HepG2 (cell line): ENCODE measurements at regions of chr7 and their contacts with region 1.

Region 1: GRCh38 chr7:27662490-27663205 is at the start of gene HIBADH:
- DNase-seq: peak; percentile 98
- ATAC-seq: peak; percentile 97
- H3K4me3 ChIP-seq: peak within 1 kb of the TSS; percentile 83 to 100 (median 87)
- H3K27ac ChIP-seq: peak within 1 kb of the TSS; percentile 91
- H3K4me1 ChIP-seq: peaks cover 33% of the 10 kb centered on the region
- H3K27me3 ChIP-seq: no peaks in the 10 kb centered on the region; a peak in 1 of 5 replicates
- CTCF ChIP-seq: peak; percentile 53
- EP300 ChIP-seq: no peak
- POLR2A ChIP-seq: peak; percentile 74 to 78; a peak in 3 of 4 replicates
- RAD21 ChIP-seq: no peak; the same call in 1 of the 2 replicates
- total RNA-seq, gene HIBADH: 59.5 and 75.2 TPM in 2 replicates

Region 2: DNA sequence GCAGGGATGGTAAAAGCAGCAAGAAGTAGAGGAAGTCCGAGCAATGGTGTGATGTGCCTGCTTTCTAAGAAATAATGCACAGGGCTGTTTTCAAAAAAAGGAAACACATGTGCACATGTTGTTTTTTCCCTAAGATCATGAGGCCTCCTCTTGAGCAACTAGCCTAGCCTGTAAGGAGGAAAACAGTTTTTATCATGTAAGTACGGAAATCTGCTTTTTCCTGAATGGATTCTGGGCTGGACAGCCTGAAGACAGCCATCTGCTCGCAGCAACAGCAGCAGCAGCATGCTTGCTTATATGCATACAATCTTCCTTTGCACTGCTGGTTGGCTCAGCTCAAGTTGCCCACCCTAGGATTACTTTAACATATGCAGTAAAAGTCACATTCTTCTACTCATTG is 87.0 kb before region 1 on chr7:
- CTCF ChIA-PET with region 1: no interaction called
- POLR2A ChIA-PET with region 1: no interaction called
- in situ Hi-C with region 1: no loop called
- intact Hi-C with region 1: no loop called
- DNase-seq: no peak
- ATAC-seq: no peak
- H3K4me3 ChIP-seq: no peak overlapping the region
- H3K27ac ChIP-seq: no peak overlapping the region
- H3K4me1 ChIP-seq: peaks cover 27% of the 10 kb centered on the region
- H3K27me3 ChIP-seq: no peaks in the 10 kb centered on the region
- CTCF ChIP-seq: no peak
- EP300 ChIP-seq: no peak
- POLR2A ChIP-seq: no peak
- RAD21 ChIP-seq: no peak

Region 3: GRCh38 chr7:27616914-27617548 is 45.6 kb before region 1 on chr7:
- CTCF ChIA-PET with region 1: no interaction called
- POLR2A ChIA-PET with region 1: interaction called, 19 read pairs
- in situ Hi-C with region 1: no loop called
- intact Hi-C with region 1: loop called (anchors 1 kb)
- DNase-seq: peak; percentile 12
- ATAC-seq: peak; percentile 36
- H3K4me3 ChIP-seq: peak overlapping the region; percentile 51 to 64 (median 58)
- H3K27ac ChIP-seq: peak overlapping the region; percentile 97
- H3K4me1 ChIP-seq: peaks cover 35% of the 10 kb centered on the region
- H3K27me3 ChIP-seq: no peaks in the 10 kb centered on the region
- CTCF ChIP-seq: no peak
- EP300 ChIP-seq: no peak
- POLR2A ChIP-seq: no peak
- RAD21 ChIP-seq: no peak

Region 4: GRCh38 chr7:27677912-27678612 is 15.4 kb after region 1 on chr7:
- CTCF ChIA-PET with region 1: no interaction called
- POLR2A ChIA-PET with region 1: interaction called, 29 read pairs
- in situ Hi-C with region 1: no loop called
- intact Hi-C with region 1: no loop called
- DNase-seq: peak; percentile 83
- ATAC-seq: peak; percentile 62
- H3K4me3 ChIP-seq: no peak overlapping the region; a peak in 1 of 6 replicates
- H3K27ac ChIP-seq: peak overlapping the region; percentile 74
- H3K4me1 ChIP-seq: peaks cover 41% of the 10 kb centered on the region
- H3K27me3 ChIP-seq: no peaks in the 10 kb centered on the region
- CTCF ChIP-seq: no peak
- EP300 ChIP-seq: peak in 1 of 2 experiments; percentile 55; a peak in 1 of 4 replicates
- POLR2A ChIP-seq: no peak
- RAD21 ChIP-seq: no peak

Region 5: GRCh38 chr7:27689591-27690164 is 27.0 kb after region 1 on chr7:
- CTCF ChIA-PET with region 1: no interaction called
- POLR2A ChIA-PET with region 1: interaction called, 10 read pairs
- in situ Hi-C with region 1: no loop called
- intact Hi-C with region 1: no loop called
- DNase-seq: peak; percentile 35
- ATAC-seq: peak; percentile 92
- H3K4me3 ChIP-seq: no peak overlapping the region
- H3K27ac ChIP-seq: no peak overlapping the region
- H3K4me1 ChIP-seq: peaks cover 40% of the 10 kb centered on the region
- H3K27me3 ChIP-seq: no peaks in the 10 kb centered on the region
- CTCF ChIP-seq: peak; percentile 87
- EP300 ChIP-seq: no peak
- POLR2A ChIP-seq: no peak
- RAD21 ChIP-seq: peak; percentile 76

Region 6: DNA sequence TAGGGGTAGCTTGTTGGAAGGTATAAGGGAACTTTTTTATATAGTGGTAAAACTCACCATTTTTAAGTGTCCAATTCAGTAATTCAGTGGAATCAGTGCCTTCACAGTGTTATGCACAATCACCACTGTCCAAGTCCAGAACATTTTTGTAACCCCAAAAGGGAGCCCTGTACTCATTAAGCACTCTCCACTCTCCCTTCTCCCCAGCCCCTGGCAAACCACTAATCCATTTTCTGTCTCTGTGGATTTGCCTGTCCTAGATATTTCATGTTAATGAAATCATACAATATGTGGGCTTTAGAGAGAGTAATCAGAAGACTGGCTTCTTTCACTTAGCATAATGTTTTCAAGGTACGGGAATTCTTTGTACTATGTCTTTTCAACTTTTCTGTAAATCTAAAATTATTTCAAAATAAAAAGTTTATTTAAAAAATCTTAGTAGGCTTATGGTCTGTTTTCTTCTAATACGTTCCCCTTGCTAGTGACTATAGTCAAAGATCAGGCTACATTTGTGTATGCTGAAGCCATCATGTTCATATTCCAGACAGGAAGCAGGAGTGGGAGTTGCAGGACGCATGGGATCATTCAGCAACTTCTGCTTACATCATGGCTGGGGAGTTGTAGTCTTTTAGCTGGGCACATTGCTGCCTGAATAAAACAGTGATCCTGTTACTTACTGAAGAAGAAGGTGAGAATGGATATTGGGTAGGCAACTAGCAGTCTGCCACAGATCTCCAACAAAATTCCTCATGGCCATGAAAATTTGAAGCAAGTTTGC is 42.0 kb after region 1 on chr7:
- CTCF ChIA-PET with region 1: no interaction called
- POLR2A ChIA-PET with region 1: no interaction called
- in situ Hi-C with region 1: no loop called
- intact Hi-C with region 1: no loop called
- DNase-seq: no peak
- ATAC-seq: no peak
- H3K4me3 ChIP-seq: no peak overlapping the region
- H3K27ac ChIP-seq: no peak overlapping the region
- H3K4me1 ChIP-seq: no peaks in the 10 kb centered on the region
- H3K27me3 ChIP-seq: no peaks in the 10 kb centered on the region
- CTCF ChIP-seq: no peak
- EP300 ChIP-seq: no peak
- POLR2A ChIP-seq: no peak
- RAD21 ChIP-seq: no peak

Region 7: GRCh38 chr7:27714831-27715444 is 52.3 kb after region 1 on chr7:
- CTCF ChIA-PET with region 1: no interaction called
- POLR2A ChIA-PET with region 1: interaction called, 10 read pairs
- in situ Hi-C with region 1: no loop called
- intact Hi-C with region 1: no loop called
- DNase-seq: peak; percentile 86
- ATAC-seq: peak; percentile 85
- H3K4me3 ChIP-seq: peak overlapping the region in 1 of 3 experiments; percentile 16; a peak in 1 of 6 replicates
- H3K27ac ChIP-seq: peak overlapping the region; percentile 11
- H3K4me1 ChIP-seq: peaks cover 58% of the 10 kb centered on the region
- H3K27me3 ChIP-seq: no peaks in the 10 kb centered on the region
- CTCF ChIP-seq: no peak
- EP300 ChIP-seq: peak in 1 of 2 experiments; percentile 30; a peak in 1 of 4 replicates
- POLR2A ChIP-seq: no peak
- RAD21 ChIP-seq: no peak

Region 8: DNA sequence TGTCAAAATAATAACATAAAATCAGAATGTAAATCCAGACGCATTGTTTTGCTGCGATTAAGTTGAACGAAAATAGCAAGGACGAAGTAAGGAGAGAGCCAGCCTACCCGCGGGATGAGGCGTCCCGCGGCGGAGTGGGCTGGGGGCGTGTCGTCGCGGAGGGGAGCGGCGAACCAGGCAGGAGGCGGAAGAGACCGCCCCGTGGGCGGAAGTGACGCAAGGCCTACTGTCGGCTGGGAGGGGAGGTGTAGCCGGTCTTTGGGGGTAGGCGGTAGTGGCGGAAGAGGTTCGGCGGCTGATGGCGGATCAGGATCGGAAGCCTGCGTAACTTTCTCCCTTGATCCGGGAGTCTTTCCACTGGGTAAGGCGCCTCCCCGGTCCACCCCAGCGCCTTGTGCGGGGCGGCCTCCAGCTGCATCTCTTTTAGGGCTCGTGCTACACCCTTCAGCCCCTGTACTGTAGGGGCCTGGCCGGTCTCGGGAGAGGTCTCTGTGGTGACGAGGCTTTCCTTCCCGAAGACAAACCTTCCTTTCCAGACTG is 77.3 kb after region 1 on chr7 and contains the start of gene TAX1BP1:
- CTCF ChIA-PET with region 1: no interaction called
- POLR2A ChIA-PET with region 1: interaction called, 58 read pairs
- in situ Hi-C with region 1: no loop called
- intact Hi-C with region 1: loop called (anchors 1 kb)
- DNase-seq: peak; percentile 89
- ATAC-seq: peak; percentile 90
- H3K4me3 ChIP-seq: peak within 1 kb of the TSS; percentile 97 to 98 (median 98)
- H3K27ac ChIP-seq: peak within 1 kb of the TSS; percentile 97
- H3K4me1 ChIP-seq: peaks cover 55% of the 10 kb centered on the region
- H3K27me3 ChIP-seq: no peaks in the 10 kb centered on the region; a peak in 1 of 5 replicates
- CTCF ChIP-seq: 0 out of 2 replicates have a peak, but pooled peaks have one; percentile 1
- EP300 ChIP-seq: peak in 1 of 2 experiments; percentile 29; a peak in 1 of 4 replicates
- POLR2A ChIP-seq: peak; percentile 86 to 92; a peak in 3 of 4 replicates
- RAD21 ChIP-seq: peak; percentile 11; the same call in 1 of the 2 replicates
- total RNA-seq, gene TAX1BP1: 98.9 and 177 TPM in 2 replicates

Region 9: GRCh38 chr7:27745064-27745583 is 82.5 kb after region 1 on chr7:
- CTCF ChIA-PET with region 1: no interaction called
- POLR2A ChIA-PET with region 1: interaction called, 58 read pairs
- in situ Hi-C with region 1: no loop called
- intact Hi-C with region 1: loop called (anchors 1 kb)
- DNase-seq: peak; percentile 92
- ATAC-seq: peak; percentile 65
- H3K4me3 ChIP-seq: peak overlapping the region in 2 of 3 experiments; percentile 35 to 47; a peak in 4 of 6 replicates
- H3K27ac ChIP-seq: peak overlapping the region; percentile 92
- H3K4me1 ChIP-seq: peaks cover 52% of the 10 kb centered on the region
- H3K27me3 ChIP-seq: no peaks in the 10 kb centered on the region; a peak in 1 of 5 replicates
- CTCF ChIP-seq: peak; percentile 86
- EP300 ChIP-seq: peak in 1 of 2 experiments; percentile 68; a peak in 2 of 4 replicates
- POLR2A ChIP-seq: peak in 1 of 2 experiments; percentile 66; a peak in 2 of 4 replicates
- RAD21 ChIP-seq: peak; percentile 43; the same call in 1 of the 2 replicates

Region 10: DNA sequence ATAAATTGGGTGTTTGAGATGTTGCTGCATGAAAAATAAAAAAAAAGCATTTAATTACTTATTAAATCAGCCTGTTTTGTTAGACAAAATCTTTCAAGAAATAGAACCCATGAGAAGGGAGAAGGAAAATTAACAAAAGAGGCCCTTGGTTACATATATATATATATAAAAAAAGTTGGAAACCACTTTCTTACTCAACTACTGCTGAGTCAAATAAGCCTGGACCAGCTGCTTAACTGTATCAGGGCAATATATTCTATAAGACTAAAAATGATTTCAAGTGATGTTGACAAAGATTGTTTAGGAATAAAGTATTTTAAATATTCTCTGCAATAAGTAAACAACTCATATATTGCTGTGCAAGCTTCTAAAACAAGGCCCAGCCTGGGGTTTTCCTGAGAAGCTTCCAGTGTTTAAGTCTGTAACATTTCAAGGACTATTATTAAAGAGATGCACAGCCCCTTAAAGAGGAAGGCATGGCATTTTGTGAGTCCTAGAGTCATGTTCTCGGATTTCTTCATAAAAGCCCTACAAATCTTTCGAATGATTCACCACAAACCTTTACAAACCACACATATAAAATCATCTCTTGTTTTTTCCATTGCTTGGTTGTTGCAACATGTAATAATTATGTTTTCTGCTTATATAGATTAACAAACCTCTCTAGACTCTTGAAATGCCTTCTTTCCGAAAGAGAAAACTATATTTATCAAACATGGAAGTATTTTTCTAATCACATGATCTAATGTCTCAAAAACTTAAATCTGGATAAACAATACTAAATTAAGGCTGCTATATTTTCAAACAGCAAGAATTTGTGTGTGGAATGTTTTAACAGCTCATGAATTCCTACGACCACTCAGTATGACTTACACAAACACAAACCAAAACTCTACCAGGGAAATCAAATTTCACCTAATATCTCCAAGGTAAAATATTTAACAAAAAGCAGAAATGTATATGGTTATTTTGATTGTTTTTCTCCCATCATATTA is 503.6 kb after region 1 on chr7:
- CTCF ChIA-PET with region 1: no interaction called
- POLR2A ChIA-PET with region 1: no interaction called
- in situ Hi-C with region 1: no loop called
- intact Hi-C with region 1: no loop called
- DNase-seq: no peak
- ATAC-seq: no peak
- H3K4me3 ChIP-seq: no peak overlapping the region
- H3K27ac ChIP-seq: no peak overlapping the region
- H3K4me1 ChIP-seq: no peaks in the 10 kb centered on the region
- H3K27me3 ChIP-seq: peaks cover 1 to 9% of the 10 kb centered on the region in 2 experiments; a peak in 4 of 5 replicates
- CTCF ChIP-seq: no peak
- EP300 ChIP-seq: no peak
- POLR2A ChIP-seq: no peak
- RAD21 ChIP-seq: no peak